Psoas muscle (tissue), 8 donors: ENCODE measurements at regions of chr2 and their contacts with region 1.

Region 1: DNA sequence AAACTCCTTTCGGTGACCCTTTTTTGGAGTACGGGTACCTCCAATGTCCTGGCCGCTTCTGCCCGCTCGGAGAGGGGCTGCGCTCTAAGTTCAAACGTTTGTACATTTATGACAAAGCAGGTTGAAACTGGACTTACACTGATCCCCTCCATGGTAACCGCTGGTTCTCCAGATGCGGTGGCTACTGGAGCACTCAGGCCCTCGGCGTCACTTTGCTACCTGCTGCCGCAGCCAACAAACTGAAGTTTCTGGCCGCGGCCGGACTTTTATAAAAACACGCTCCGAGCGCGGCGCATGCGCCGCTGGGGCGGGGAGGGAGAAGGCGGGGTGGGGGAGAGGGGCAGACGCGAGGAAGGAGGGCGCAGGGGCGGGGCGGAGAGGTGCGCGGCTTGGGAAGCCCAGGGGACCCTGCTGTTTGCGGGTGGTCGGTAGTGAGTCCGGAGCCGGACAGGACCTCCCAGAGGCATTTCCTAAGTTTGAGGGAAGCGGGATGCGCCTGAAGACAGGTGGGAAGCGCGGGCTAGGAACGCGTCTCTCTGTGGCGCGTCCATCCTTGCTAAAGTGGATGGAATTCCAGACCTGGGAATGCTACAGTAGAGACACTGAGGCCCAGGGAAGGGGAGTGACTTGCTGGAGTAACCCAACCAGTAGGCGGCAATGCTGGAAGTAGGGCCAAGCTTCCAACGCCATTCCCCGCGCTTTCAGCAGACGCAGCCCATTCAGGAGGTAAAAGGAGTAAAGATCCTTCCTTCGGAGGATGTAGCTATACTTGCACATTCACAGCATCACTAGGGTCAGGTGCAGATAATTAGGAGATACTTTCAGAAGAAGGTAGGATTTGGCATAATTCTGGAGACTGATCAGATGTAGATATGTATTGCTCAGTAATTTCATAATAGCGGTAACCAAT is at the start of gene CXCR4:
- DNase-seq: peak; percentile 59 to 79
- ATAC-seq: peak; percentile 39 to 70 (median 49)
- H3K4me3 ChIP-seq: peak within 1 kb of the TSS; percentile 71
- H3K27ac ChIP-seq: peak within 1 kb of the TSS; percentile 36
- H3K4me1 ChIP-seq: peaks cover 10% of the 10 kb centered on the region
- H3K27me3 ChIP-seq: peaks cover 0 to 83% (median 14%) of the 10 kb centered on the region in 3 donors
- CTCF ChIP-seq: peak; percentile 2
- total RNA-seq, gene CXCR4: 2.6 to 8.2 (median 5.0) TPM

Region 2: GRCh38 chr2:135913727-135914365 is 204.3 kb before region 1 on chr2:
- intact Hi-C with region 1: loop called in 1 of 2 experiments (anchors 5 kb)
- DNase-seq: no peak
- ATAC-seq: no peak
- H3K4me3 ChIP-seq: no peak overlapping the region
- H3K27ac ChIP-seq: no peak overlapping the region
- H3K4me1 ChIP-seq: no peaks in the 10 kb centered on the region
- H3K27me3 ChIP-seq: no peaks in the 10 kb centered on the region
- CTCF ChIP-seq: peak; percentile 77

Region 3: GRCh38 chr2:136019306-136019705 is 98.9 kb before region 1 on chr2:
- intact Hi-C with region 1: loop called in 1 of 2 experiments (anchors 10 kb)
- DNase-seq: no peak
- ATAC-seq: no peak
- H3K4me3 ChIP-seq: no peak overlapping the region
- H3K27ac ChIP-seq: no peak overlapping the region
- H3K4me1 ChIP-seq: peaks cover 13% of the 10 kb centered on the region
- H3K27me3 ChIP-seq: no peaks in the 10 kb centered on the region
- CTCF ChIP-seq: no peak

Region 4: GRCh38 chr2:136378712-136379595 is 260.8 kb after region 1 on chr2:
- intact Hi-C with region 1: loop called in 1 of 2 experiments (anchors 5 kb)
- DNase-seq: peak in 1 of 2 donors; percentile 27
- ATAC-seq: peak; percentile 43 to 77 (median 58)
- H3K4me3 ChIP-seq: no peak overlapping the region
- H3K27ac ChIP-seq: no peak overlapping the region
- H3K4me1 ChIP-seq: no peaks in the 10 kb centered on the region
- H3K27me3 ChIP-seq: no peaks in the 10 kb centered on the region
- CTCF ChIP-seq: peak; percentile 62